GM12878 (cell line): ENCODE measurements at regions of chr6 and their contacts with region 1.

Region 1: GRCh38 chr6:130537447-130537846 is 171.6 kb downstream of the TMEM200A start:
- DNase-seq: no peak
- ATAC-seq: no peak
- H3K4me3 ChIP-seq: no peak overlapping the region
- H3K27ac ChIP-seq: no peak overlapping the region
- H3K4me1 ChIP-seq: no peaks in the 10 kb centered on the region
- H3K27me3 ChIP-seq: no peaks in the 10 kb centered on the region
- CTCF ChIP-seq: no peak
- EP300 ChIP-seq: no peak
- POLR2A ChIP-seq: no peak
- RAD21 ChIP-seq: no peak

Region 2: GRCh38 chr6:130525408-130525807 is 12.0 kb before region 1 on chr6:
- CTCF ChIA-PET with region 1: no interaction called
- POLR2A ChIA-PET with region 1: no interaction called
- RAD21 ChIA-PET with region 1: interaction called, 4 read pairs
- SMC1A ChIA-PET with region 1: interaction called, 19 read pairs
- in situ Hi-C with region 1: no loop called
- intact Hi-C with region 1: no loop called
- DNase-seq: no peak
- ATAC-seq: peak; percentile 64
- H3K4me3 ChIP-seq: no peak overlapping the region
- H3K27ac ChIP-seq: no peak overlapping the region
- H3K4me1 ChIP-seq: peaks cover 2% of the 10 kb centered on the region; the same call in 1 of the 2 replicates
- H3K27me3 ChIP-seq: no peaks in the 10 kb centered on the region
- CTCF ChIP-seq: no peak
- EP300 ChIP-seq: no peak
- POLR2A ChIP-seq: no peak
- RAD21 ChIP-seq: peak; percentile 24; the same call in 1 of the 2 replicates

Region 3: GRCh38 chr6:131054392-131055250 is 517.2 kb after region 1 on chr6:
- CTCF ChIA-PET with region 1: no interaction called
- POLR2A ChIA-PET with region 1: no interaction called
- RAD21 ChIA-PET with region 1: no interaction called
- SMC1A ChIA-PET with region 1: no interaction called
- in situ Hi-C with region 1: no loop called
- intact Hi-C with region 1: no loop called
- DNase-seq: no peak
- ATAC-seq: no peak
- H3K4me3 ChIP-seq: no peak overlapping the region
- H3K27ac ChIP-seq: no peak overlapping the region
- H3K4me1 ChIP-seq: no peaks in the 10 kb centered on the region
- H3K27me3 ChIP-seq: no peaks in the 10 kb centered on the region
- CTCF ChIP-seq: no peak
- EP300 ChIP-seq: no peak
- POLR2A ChIP-seq: no peak
- RAD21 ChIP-seq: no peak